PC-9 (cell line): ENCODE measurements at regions of chr2 and their contacts with region 1.

Region 1: GRCh38 chr2:86440631-86441391 is at the start of gene KDM3A:
- DNase-seq: peak; percentile 97 to 99
- H3K4me3 ChIP-seq: peak within 1 kb of the TSS; percentile 75
- H3K27ac ChIP-seq: peak within 1 kb of the TSS; percentile 99
- H3K4me1 ChIP-seq: peaks cover 24% of the 10 kb centered on the region
- H3K27me3 ChIP-seq: no peaks in the 10 kb centered on the region
- CTCF ChIP-seq: no peak
- total RNA-seq, gene KDM3A: 31.8 and 39.3 TPM in 2 replicates

Region 2: DNA sequence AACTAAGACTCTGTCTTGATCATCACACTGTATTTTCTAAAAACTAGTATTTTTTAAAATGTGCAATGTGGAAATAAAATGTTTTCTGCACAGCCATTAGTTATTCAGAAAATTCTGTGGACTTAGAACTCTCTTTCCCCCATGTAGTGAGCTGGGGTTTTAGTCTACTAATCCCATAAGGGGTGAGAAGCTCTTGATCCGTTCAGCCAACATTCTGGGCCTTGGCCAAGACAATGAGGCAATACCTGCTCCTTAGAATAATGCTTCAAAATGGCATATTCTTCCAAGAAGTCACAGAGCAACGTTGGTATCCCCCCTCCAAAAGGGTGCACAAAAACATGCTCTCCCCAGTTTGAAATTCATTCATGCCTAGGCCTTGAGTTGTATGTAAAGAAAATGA is 107.4 kb before region 1 on chr2:
- CTCF ChIA-PET with region 1: interaction called, 4 read pairs
- POLR2A ChIA-PET with region 1: interaction called, 14 read pairs
- intact Hi-C with region 1: no loop called
- DNase-seq: no peak
- H3K4me3 ChIP-seq: no peak overlapping the region
- H3K27ac ChIP-seq: no peak overlapping the region
- H3K4me1 ChIP-seq: no peaks in the 10 kb centered on the region
- H3K27me3 ChIP-seq: peaks cover 80% of the 10 kb centered on the region
- CTCF ChIP-seq: no peak

Region 3: GRCh38 chr2:86383844-86384243 is 57.0 kb before region 1 on chr2:
- CTCF ChIA-PET with region 1: no interaction called
- POLR2A ChIA-PET with region 1: interaction called, 15 read pairs
- intact Hi-C with region 1: no loop called
- DNase-seq: no peak
- H3K4me3 ChIP-seq: no peak overlapping the region
- H3K27ac ChIP-seq: no peak overlapping the region
- H3K4me1 ChIP-seq: no peaks in the 10 kb centered on the region
- H3K27me3 ChIP-seq: no peaks in the 10 kb centered on the region
- CTCF ChIP-seq: no peak

Region 4: GRCh38 chr2:86464652-86465051 is 23.8 kb after region 1 on chr2:
- CTCF ChIA-PET with region 1: no interaction called
- POLR2A ChIA-PET with region 1: no interaction called
- intact Hi-C with region 1: no loop called
- DNase-seq: no peak
- H3K4me3 ChIP-seq: no peak overlapping the region
- H3K27ac ChIP-seq: no peak overlapping the region
- H3K4me1 ChIP-seq: no peaks in the 10 kb centered on the region
- H3K27me3 ChIP-seq: no peaks in the 10 kb centered on the region
- CTCF ChIP-seq: no peak

Region 5: GRCh38 chr2:86552889-86553288 is 112.1 kb after region 1 on chr2:
- CTCF ChIA-PET with region 1: interaction called, 4 read pairs
- POLR2A ChIA-PET with region 1: interaction called, 5 read pairs
- intact Hi-C with region 1: loop called (anchors 2 kb)
- DNase-seq: no peak
- H3K4me3 ChIP-seq: no peak overlapping the region
- H3K27ac ChIP-seq: no peak overlapping the region
- H3K4me1 ChIP-seq: no peaks in the 10 kb centered on the region
- H3K27me3 ChIP-seq: no peaks in the 10 kb centered on the region
- CTCF ChIP-seq: no peak

Region 6: DNA sequence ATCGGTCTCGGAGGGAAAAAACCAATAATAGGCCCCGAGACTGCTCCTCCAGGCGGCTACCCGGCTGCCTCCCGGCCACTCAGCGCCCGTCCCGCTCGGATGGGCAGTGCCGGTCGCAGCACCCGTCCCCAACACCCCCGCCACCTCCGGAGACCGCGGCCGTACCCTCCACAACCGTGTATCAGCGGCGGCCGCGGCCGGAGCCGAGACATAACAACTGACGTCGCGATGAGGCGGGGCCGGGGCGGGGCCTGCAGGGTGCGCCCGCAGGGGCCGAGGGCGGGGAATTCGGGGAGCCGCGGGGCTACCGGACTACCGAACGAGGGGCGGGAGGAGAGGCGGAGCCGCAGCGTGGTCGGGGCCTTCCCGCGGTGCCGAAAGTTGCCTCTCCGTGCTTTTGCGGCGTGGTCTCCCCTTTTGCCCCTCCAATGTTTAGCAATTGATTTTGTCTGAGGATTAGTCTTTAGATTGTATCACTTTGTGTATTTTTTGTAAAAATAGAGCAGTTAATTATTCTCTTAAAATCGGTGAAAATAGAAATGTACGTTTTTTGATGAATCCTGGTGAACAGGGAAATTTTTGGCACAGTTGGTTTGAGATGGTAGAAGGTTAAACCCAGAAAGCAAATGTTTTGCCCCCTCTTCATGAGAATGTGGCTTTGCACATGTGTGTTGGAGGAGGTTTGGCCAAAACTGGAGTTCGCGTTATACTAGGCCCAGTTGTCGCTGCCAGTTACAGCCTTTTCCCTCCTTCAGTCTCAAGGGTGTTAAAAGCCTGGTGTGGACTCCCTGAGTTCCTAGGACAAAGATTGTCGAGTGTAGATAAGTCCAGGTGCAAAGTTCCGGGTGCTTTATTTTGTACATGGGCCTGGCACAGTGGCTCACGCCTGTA is 183.1 kb after region 1 on chr2 and contains the start of gene RNF103:
- CTCF ChIA-PET with region 1: no interaction called
- POLR2A ChIA-PET with region 1: no interaction called
- intact Hi-C with region 1: loop called (anchors 5 kb)
- DNase-seq: peak; percentile 78 to 94
- H3K4me3 ChIP-seq: peak within 1 kb of the TSS; percentile 78
- H3K27ac ChIP-seq: peak within 1 kb of the TSS; percentile 89
- H3K4me1 ChIP-seq: peaks cover 16% of the 10 kb centered on the region
- H3K27me3 ChIP-seq: no peaks in the 10 kb centered on the region
- CTCF ChIP-seq: no peak
- total RNA-seq, gene RNF103: 24.5 and 25.4 TPM in 2 replicates